HepG2 (cell line): ENCODE measurements at regions of chr12 and their contacts with region 1.

Region 1: GRCh38 chr12:102824218-102824835 is 92.7 kb downstream of the PAH start:
- DNase-seq: peak; percentile 18
- ATAC-seq: peak; percentile 99
- H3K4me3 ChIP-seq: peak overlapping the region in 1 of 3 experiments; percentile 33; a peak in 1 of 6 replicates
- H3K27ac ChIP-seq: no peak overlapping the region
- H3K4me1 ChIP-seq: no peaks in the 10 kb centered on the region
- H3K27me3 ChIP-seq: peaks cover 2 to 10% of the 10 kb centered on the region in 2 experiments; a peak in 3 of 5 replicates
- CTCF ChIP-seq: peak; percentile 8; the same call in 1 of the 2 replicates
- EP300 ChIP-seq: no peak
- POLR2A ChIP-seq: no peak
- RAD21 ChIP-seq: no peak

Region 2: DNA sequence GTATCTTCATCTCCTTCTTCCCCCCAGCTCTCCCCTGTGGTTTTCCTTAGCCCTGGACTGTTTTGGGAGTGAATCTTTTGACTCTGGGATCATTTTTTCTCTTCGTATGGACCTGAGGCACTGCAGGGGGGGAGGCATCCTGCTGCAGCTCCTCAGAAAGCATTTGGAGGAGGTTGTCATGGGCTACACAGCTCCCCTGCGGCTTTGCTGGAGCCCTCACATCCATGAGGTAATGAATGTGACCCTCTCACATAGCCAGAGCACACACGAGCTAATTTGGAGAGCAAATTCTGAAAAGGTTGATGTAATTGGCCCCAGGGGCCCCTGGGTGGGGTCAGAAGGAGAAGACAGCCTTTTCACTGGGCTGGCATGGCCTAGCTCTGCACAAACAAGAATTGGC is 18.2 kb before region 1 on chr12:
- CTCF ChIA-PET with region 1: no interaction called
- POLR2A ChIA-PET with region 1: no interaction called
- in situ Hi-C with region 1: no loop called
- intact Hi-C with region 1: loop called (anchors 1 kb)
- DNase-seq: no peak
- ATAC-seq: no peak
- H3K4me3 ChIP-seq: no peak overlapping the region
- H3K27ac ChIP-seq: no peak overlapping the region
- H3K4me1 ChIP-seq: no peaks in the 10 kb centered on the region
- H3K27me3 ChIP-seq: no peaks in the 10 kb centered on the region
- CTCF ChIP-seq: no peak
- EP300 ChIP-seq: no peak
- POLR2A ChIP-seq: no peak
- RAD21 ChIP-seq: no peak

Region 3: GRCh38 chr12:103013741-103014300 is 189.5 kb after region 1 on chr12:
- CTCF ChIA-PET with region 1: no interaction called
- POLR2A ChIA-PET with region 1: no interaction called
- in situ Hi-C with region 1: no loop called
- intact Hi-C with region 1: no loop called
- DNase-seq: no peak
- ATAC-seq: no peak
- H3K4me3 ChIP-seq: no peak overlapping the region
- H3K27ac ChIP-seq: no peak overlapping the region
- H3K4me1 ChIP-seq: no peaks in the 10 kb centered on the region
- H3K27me3 ChIP-seq: peaks cover 0 to 3% of the 10 kb centered on the region in 2 experiments; a peak in 1 of 5 replicates
- CTCF ChIP-seq: no peak
- EP300 ChIP-seq: no peak
- POLR2A ChIP-seq: no peak
- RAD21 ChIP-seq: no peak